Activated B cell treated with CpG ODN at 0.5 μM for 24 hours (primary cell): ENCODE measurements at regions of chr18 and their contacts with region 1.

Region 1: DNA sequence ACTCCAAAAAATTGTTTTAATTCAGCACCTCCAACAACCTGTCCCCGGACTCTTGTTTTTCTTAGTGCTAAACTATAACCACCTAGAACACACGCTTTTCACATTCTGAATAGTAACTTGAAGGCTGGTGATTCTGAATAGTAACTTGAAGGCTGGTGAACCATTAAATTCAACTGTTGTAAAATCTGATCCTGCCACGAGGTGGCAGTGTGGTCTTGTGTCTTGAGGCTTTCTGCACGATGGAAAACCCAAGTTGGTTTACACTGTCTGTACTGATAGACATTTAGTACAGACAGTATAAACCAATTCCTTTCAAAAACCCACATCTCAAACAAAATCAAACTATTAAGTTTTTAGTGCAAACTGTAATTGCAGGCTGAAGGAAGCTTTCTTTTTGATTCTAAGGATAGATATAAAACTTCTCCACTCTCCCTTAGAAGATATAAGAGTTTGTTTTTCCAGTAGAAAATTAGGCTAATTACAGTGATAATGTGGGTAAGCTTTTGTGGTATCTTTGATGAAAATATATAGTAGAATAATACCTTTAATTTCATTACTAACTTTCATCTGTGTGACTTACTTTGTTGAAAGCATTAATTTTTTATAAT is 57.6 kb downstream of the VAPA start:
- DNase-seq: peak; percentile 32
- ATAC-seq: peak; percentile 81
- H3K4me3 Mint-ChIP-seq: no peak overlapping the region
- H3K27ac Mint-ChIP-seq: no peak overlapping the region
- H3K4me1 Mint-ChIP-seq: peaks cover 14% of the 10 kb centered on the region
- H3K27me3 Mint-ChIP-seq: peaks cover 35% of the 10 kb centered on the region
- CTCF ChIP-seq: peak; percentile 36

Region 2: GRCh38 chr18:7987284-7987976 is 1984.0 kb before region 1 on chr18:
- CTCF ChIA-PET with region 1: no interaction called
- POLR2A ChIA-PET with region 1: no interaction called
- intact Hi-C with region 1: no loop called
- DNase-seq: no peak
- ATAC-seq: no peak
- H3K4me3 Mint-ChIP-seq: no peak overlapping the region
- H3K27ac Mint-ChIP-seq: no peak overlapping the region
- H3K4me1 Mint-ChIP-seq: no peaks in the 10 kb centered on the region
- H3K27me3 Mint-ChIP-seq: no peaks in the 10 kb centered on the region
- CTCF ChIP-seq: no peak

Region 3: GRCh38 chr18:9925369-9925768 is 46.0 kb before region 1 on chr18:
- CTCF ChIA-PET with region 1: no interaction called
- POLR2A ChIA-PET with region 1: no interaction called
- intact Hi-C with region 1: no loop called
- DNase-seq: no peak
- ATAC-seq: no peak
- H3K4me3 Mint-ChIP-seq: no peak overlapping the region
- H3K27ac Mint-ChIP-seq: no peak overlapping the region
- H3K4me1 Mint-ChIP-seq: peaks cover 72% of the 10 kb centered on the region
- H3K27me3 Mint-ChIP-seq: no peaks in the 10 kb centered on the region
- CTCF ChIP-seq: no peak

Region 4: DNA sequence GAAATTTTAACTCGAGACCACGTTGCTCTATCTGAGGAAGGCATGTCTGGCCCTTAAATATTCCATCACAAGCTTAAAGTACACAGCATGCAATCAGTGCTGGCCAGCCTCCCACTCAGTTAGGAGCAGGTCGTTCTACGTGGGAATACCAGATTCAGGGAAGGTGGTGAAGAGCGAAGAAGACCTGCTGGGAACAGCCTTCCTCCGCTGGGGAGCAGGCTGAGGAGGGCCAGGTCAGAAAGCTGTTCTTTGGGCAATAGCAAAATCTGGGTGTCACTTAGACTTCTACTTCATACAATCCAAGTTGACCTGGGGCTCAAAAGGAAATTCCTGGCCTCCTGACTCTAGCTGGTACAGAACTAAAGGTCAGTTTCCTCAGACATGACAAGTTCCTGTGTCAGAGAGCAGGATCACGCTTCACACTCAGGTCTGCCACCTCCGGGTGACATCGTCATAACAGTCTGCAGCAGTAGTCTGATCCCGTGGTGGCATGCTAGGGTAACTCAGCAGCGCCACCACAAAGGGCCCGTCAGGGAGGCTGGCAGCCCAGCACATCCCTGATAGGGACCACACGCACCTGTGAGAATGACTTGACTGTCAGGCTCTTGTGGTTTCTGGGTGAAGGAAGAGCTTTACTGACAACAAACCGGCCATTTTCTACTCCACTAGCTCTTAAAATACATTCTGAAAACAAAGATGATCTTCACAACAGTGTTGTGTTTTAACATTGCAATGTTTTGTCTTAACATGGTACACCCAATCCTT is 519.2 kb after region 1 on chr18:
- CTCF ChIA-PET with region 1: interaction called, 8 read pairs
- POLR2A ChIA-PET with region 1: no interaction called
- intact Hi-C with region 1: loop called (anchors 1 kb)
- DNase-seq: peak; percentile 53
- ATAC-seq: peak; percentile 100
- H3K4me3 Mint-ChIP-seq: no peak overlapping the region
- H3K27ac Mint-ChIP-seq: peak overlapping the region; percentile 72
- H3K4me1 Mint-ChIP-seq: peaks cover 25% of the 10 kb centered on the region
- H3K27me3 Mint-ChIP-seq: no peaks in the 10 kb centered on the region
- CTCF ChIP-seq: no peak

Region 5: DNA sequence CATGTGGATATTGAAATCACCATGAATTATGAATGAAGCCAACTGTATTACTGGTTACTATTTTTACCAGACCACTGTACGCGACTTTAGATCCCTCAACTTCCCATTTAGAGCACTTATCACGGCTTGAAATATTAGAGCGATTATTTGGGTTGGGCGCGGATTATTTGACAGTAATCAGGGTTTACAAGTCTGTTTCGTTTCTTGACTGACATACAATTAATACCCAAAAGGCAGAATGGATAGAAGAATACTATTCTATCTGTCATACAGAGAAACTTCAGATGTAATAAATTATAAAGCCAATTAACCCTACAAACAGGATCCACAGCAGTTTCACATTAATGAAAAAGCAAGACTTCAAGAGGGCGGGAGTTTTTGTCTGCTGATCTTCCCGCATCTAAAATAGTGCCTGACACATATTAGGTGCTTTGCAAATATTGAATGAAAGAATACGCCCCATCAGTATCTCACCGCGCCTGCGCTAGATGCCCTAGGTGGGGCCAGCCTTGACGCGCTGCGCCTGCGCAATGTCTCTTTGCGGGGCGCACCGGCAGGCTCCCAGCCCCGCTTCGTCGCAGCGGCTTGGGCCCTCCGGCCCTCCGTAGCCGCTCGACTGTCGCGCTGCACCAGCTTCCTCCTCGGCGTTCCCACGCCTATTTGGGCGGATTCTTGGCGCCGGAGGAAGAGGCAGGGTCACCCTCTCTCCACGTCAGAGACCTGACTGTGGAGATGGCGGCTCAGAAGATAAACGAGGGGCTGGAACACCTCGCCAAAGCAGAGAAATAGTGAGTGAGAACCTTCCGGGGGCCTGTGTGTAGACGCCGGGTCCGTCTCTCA is 554.2 kb after region 1 on chr18 and contains the start of gene NAPG:
- CTCF ChIA-PET with region 1: interaction called, 65 read pairs
- POLR2A ChIA-PET with region 1: no interaction called
- intact Hi-C with region 1: loop called (anchors 1 kb)
- DNase-seq: peak; percentile 86
- ATAC-seq: peak; percentile 91
- H3K4me3 Mint-ChIP-seq: peak within 1 kb of the TSS; percentile 99
- H3K27ac Mint-ChIP-seq: peak within 1 kb of the TSS; percentile 96
- H3K4me1 Mint-ChIP-seq: peaks cover 49% of the 10 kb centered on the region
- H3K27me3 Mint-ChIP-seq: no peaks in the 10 kb centered on the region
- CTCF ChIP-seq: no peak
- total RNA-seq, gene NAPG: 24.5 and 33.3 TPM in 2 replicates

Region 6: GRCh38 chr18:11040823-11041656 is 1069.6 kb after region 1 on chr18:
- CTCF ChIA-PET with region 1: interaction called, 3 read pairs
- POLR2A ChIA-PET with region 1: no interaction called
- intact Hi-C with region 1: loop called (anchors 1 kb)
- DNase-seq: no peak
- ATAC-seq: no peak
- H3K4me3 Mint-ChIP-seq: no peak overlapping the region
- H3K27ac Mint-ChIP-seq: no peak overlapping the region
- H3K4me1 Mint-ChIP-seq: no peaks in the 10 kb centered on the region
- H3K27me3 Mint-ChIP-seq: peaks cover 8% of the 10 kb centered on the region
- CTCF ChIP-seq: no peak

Region 7: GRCh38 chr18:11741505-11742145 is 1770.2 kb after region 1 on chr18:
- CTCF ChIA-PET with region 1: no interaction called
- POLR2A ChIA-PET with region 1: no interaction called
- intact Hi-C with region 1: loop called (anchors 10 kb)
- DNase-seq: no peak
- ATAC-seq: no peak
- H3K4me3 Mint-ChIP-seq: no peak overlapping the region
- H3K27ac Mint-ChIP-seq: no peak overlapping the region
- H3K4me1 Mint-ChIP-seq: no peaks in the 10 kb centered on the region
- H3K27me3 Mint-ChIP-seq: peaks cover 30% of the 10 kb centered on the region
- CTCF ChIP-seq: no peak